ENCODE measurements at regions of chr1 and their contacts with region 1.

Region 1: GRCh38 chr1:112369392-112370285 is 26.4 kb upstream of the CTTNBP2NL start:
- DNase-seq: peak; percentile 62 to 80
- ATAC-seq: peak; percentile 100
- H3K4me3 ChIP-seq: no peak overlapping the region
- H3K27ac ChIP-seq: no peak overlapping the region
- H3K4me1 ChIP-seq: no peaks in the 10 kb centered on the region
- CTCF ChIP-seq: peak; percentile 80
- EP300 ChIP-seq: no peak
- POLR2A ChIP-seq: no peak
- RAD21 ChIP-seq: peak; percentile 75 to 85

Region 2: GRCh38 chr1:112358798-112359408 is 10.7 kb before region 1 on chr1:
- CTCF ChIA-PET with region 1: interaction called, 77 read pairs
- POLR2A ChIA-PET with region 1: no interaction called
- DNase-seq: peak; percentile 23 to 36
- ATAC-seq: peak; percentile 95 to 97
- H3K4me3 ChIP-seq: no peak overlapping the region
- H3K27ac ChIP-seq: no peak overlapping the region
- H3K4me1 ChIP-seq: no peaks in the 10 kb centered on the region
- CTCF ChIP-seq: peak; percentile 53
- EP300 ChIP-seq: no peak
- POLR2A ChIP-seq: no peak
- RAD21 ChIP-seq: peak; percentile 56 to 58

Region 3: DNA sequence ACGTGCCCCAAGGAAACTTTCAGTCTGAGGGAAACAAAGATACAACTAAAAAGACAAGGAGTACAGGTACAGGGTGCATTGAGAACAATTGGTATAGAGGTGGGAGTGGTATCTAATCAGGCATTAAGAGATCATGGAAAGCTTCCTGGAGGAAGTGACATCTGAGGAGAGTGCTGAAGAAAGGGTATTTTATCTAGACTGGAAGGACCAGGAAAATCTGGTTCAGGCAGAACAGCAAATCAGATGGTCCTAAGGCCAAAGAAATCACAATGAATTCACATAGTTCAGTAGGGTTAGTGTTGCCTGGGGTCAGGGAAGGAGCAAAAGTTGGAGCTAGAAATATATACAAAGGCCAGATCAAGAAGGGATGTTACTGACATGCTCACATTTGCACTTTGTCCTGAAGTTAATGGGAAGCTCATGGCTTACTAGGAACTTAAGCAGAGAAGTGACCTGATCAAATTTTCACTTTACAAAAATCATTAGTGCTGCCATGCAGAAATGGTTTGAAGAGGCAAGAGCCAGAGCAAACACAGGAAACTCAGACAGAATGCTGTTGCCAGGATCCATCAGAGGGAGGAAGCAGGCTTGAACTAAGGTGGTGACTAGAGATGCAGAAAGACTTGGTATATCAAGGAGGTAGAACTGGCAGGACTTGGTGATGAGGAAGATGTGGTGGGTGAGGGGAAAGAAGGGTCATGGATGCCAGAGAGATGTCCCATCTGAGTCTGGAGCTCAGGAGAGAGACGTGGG is 11.9 kb after region 1 on chr1:
- CTCF ChIA-PET with region 1: interaction called, 28 read pairs
- POLR2A ChIA-PET with region 1: no interaction called
- DNase-seq: no peak
- ATAC-seq: no peak
- H3K4me3 ChIP-seq: no peak overlapping the region
- H3K27ac ChIP-seq: no peak overlapping the region
- H3K4me1 ChIP-seq: no peaks in the 10 kb centered on the region
- CTCF ChIP-seq: no peak
- EP300 ChIP-seq: no peak
- POLR2A ChIP-seq: no peak
- RAD21 ChIP-seq: no peak

Measured in A549 (cell line).